ENCODE measurements at regions of chr6 and their contacts with region 1.

Region 1: GRCh38 chr6:110999634-111000270 is 17.9 kb downstream of the RPF2 start:
- DNase-seq: no peak
- H3K4me3 ChIP-seq: no peak overlapping the region
- H3K27ac ChIP-seq: no peak overlapping the region
- H3K4me1 ChIP-seq: no peaks in the 10 kb centered on the region
- H3K27me3 ChIP-seq: no peaks in the 10 kb centered on the region
- CTCF ChIP-seq: no peak
- EP300 ChIP-seq: no peak
- POLR2A ChIP-seq: no peak
- RAD21 ChIP-seq: no peak; a peak in 1 of 4 replicates

Region 2: GRCh38 chr6:110950443-110950842 is 49.3 kb before region 1 on chr6:
- CTCF ChIA-PET with region 1: no interaction called
- POLR2A ChIA-PET with region 1: no interaction called
- DNase-seq: no peak
- H3K4me3 ChIP-seq: no peak overlapping the region
- H3K27ac ChIP-seq: no peak overlapping the region
- H3K4me1 ChIP-seq: no peaks in the 10 kb centered on the region
- H3K27me3 ChIP-seq: no peaks in the 10 kb centered on the region
- CTCF ChIP-seq: no peak
- EP300 ChIP-seq: no peak
- POLR2A ChIP-seq: no peak
- RAD21 ChIP-seq: no peak

Region 3: GRCh38 chr6:110981202-110981600 is 18.6 kb before region 1 on chr6:
- CTCF ChIA-PET with region 1: interaction called, 3 read pairs
- POLR2A ChIA-PET with region 1: interaction called, 14 read pairs
- DNase-seq: no peak
- H3K4me3 ChIP-seq: peak overlapping the region; percentile 75 to 96 (median 94)
- H3K27ac ChIP-seq: no peak overlapping the region
- H3K4me1 ChIP-seq: no peaks in the 10 kb centered on the region
- H3K27me3 ChIP-seq: no peaks in the 10 kb centered on the region
- CTCF ChIP-seq: no peak
- EP300 ChIP-seq: no peak
- POLR2A ChIP-seq: no peak
- RAD21 ChIP-seq: no peak